SK-N-SH (cell line): ENCODE measurements at regions of chr17 and their contacts with region 1.

Region 1: DNA sequence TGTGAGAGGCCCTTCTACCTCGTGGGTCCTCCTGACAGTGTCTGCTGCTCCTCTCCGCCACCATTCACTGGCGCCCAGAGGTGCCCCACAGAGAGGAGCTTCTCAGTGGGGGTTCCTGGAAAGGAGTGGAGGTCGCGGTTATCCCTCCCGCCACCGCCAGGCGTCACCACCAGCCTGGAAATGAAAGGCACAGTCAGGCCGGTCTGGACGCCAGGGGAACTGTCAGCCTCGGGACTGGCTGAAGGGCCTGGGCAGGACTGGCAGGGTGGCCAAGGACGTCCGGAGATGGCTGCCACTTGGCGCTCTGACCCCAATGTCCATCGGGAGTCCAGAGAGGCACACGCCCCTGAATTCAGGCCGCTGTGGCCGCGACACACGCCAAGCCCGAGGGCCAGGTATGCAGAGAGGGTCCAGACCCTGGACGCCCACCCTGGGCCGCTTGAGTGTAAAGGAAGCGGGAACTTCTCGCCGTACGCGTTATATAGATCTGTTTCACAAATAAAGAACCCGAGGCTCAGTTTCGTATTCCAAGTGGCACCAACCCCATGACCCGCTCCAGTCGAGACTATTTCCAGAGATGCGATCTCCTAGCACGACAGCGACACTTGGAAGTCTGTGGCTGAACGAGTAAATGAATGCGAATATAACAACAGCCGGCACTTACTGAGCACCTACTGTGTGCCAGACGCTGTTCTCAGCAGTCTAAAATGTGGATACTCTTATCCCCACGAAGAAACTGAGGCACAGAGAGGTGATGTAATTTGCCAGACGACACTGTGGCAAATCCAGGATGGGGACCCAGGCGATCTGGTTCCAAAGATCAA is 7.6 kb upstream of the NXPH3 start:
- DNase-seq: peak; percentile 92
- H3K4me3 ChIP-seq: peak overlapping the region; percentile 40 to 56
- H3K27ac ChIP-seq: no peak overlapping the region
- H3K4me1 ChIP-seq: peaks cover 0 to 14% of the 10 kb centered on the region in 2 experiments; a peak in 1 of 4 replicates
- H3K27me3 ChIP-seq: peaks cover 61% of the 10 kb centered on the region
- CTCF ChIP-seq: peak; percentile 99
- EP300 ChIP-seq: no peak
- RAD21 ChIP-seq: peak; percentile 99

Region 2: DNA sequence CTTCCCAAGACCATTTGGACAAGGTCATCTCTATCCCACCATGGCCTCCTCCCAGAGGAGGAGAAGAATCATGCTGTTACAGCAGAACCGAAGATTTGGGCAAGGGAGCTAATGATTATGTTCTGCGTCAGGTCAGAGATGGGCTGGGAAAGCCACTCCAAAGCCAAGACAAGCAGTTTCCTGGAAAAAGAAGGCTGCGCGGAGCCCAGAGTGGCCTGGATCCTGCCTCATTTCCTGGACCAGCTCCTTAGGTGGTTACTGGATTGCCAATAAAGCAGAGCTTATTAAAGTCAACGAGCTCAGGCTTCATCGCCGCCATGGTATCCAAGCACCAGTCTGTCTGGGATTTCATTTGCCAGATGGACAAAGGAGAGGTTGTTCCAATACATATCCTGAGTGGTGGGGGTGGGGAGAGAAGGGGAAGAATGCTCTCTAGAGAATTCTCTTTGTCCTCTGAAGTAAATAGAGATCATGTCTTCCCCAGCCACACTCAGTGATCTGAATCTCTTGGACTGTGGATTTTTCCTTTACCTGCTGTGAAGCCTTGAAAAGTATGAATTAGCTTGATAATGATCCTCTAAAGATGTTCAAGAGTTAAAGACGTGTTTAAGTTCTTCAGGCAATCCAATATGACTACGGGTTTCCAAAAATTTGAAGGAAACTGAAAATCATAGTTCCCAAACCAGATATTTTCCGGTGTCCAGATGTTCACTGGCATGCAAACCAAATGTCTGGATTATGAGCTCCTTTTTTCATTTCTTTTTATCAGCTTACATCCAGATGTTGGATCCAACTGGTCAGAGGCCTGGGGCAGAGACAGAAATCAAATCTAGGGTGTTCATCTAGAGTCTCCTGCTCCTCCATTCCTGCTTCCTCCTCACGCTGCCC is 863.5 kb before region 1 on chr17:
- CTCF ChIA-PET with region 1: no interaction called
- POLR2A ChIA-PET with region 1: no interaction called
- DNase-seq: no peak
- H3K4me3 ChIP-seq: no peak overlapping the region
- H3K27ac ChIP-seq: no peak overlapping the region
- H3K4me1 ChIP-seq: no peaks in the 10 kb centered on the region
- H3K27me3 ChIP-seq: peaks cover 99% of the 10 kb centered on the region
- CTCF ChIP-seq: no peak
- EP300 ChIP-seq: no peak
- RAD21 ChIP-seq: no peak

Region 3: DNA sequence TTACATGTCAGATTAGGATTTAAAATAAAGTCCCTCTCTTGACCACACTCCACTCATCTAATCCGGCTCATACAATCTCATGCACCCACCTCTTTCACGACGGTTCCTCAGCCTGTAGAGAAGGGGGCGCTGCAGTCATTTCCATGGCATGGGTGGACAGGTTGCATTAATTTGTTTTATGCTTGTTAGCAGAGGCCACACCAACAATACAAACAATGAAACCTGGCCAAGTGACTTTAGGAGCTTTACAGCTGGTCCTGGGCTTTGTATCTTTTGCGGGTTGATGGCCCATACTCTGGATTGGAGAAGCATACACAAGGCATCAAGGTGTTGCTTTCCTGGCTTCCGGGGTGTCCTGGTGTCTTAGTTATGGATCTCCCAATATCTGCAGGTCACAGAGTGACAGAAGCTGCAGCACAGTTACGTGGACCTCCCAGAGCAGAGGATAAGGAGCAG is 613.8 kb before region 1 on chr17:
- CTCF ChIA-PET with region 1: no interaction called
- POLR2A ChIA-PET with region 1: no interaction called
- DNase-seq: no peak
- H3K4me3 ChIP-seq: no peak overlapping the region
- H3K27ac ChIP-seq: no peak overlapping the region
- H3K4me1 ChIP-seq: no peaks in the 10 kb centered on the region
- H3K27me3 ChIP-seq: no peaks in the 10 kb centered on the region
- CTCF ChIP-seq: peak; percentile 76
- EP300 ChIP-seq: no peak
- RAD21 ChIP-seq: peak; percentile 67

Region 4: GRCh38 chr17:49277638-49278037 is 290.4 kb before region 1 on chr17:
- CTCF ChIA-PET with region 1: no interaction called
- POLR2A ChIA-PET with region 1: no interaction called
- DNase-seq: no peak
- H3K4me3 ChIP-seq: no peak overlapping the region
- H3K27ac ChIP-seq: no peak overlapping the region
- H3K4me1 ChIP-seq: no peaks in the 10 kb centered on the region
- H3K27me3 ChIP-seq: no peaks in the 10 kb centered on the region
- CTCF ChIP-seq: no peak
- EP300 ChIP-seq: no peak
- RAD21 ChIP-seq: no peak

Region 5: DNA sequence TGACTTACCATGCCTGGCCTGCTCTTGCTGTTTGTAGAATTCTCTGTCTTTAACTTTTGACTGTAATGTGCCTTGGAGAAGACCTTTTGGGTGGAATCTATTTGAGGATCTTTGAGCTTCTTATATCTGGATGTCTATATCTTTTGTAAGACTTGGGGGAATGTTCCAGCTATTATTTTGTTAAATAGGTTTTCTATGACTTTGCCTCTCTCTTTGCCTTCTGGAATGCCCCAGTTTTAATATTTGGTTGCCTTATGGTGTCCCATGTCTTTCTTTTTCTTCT is 143.1 kb before region 1 on chr17:
- CTCF ChIA-PET with region 1: interaction called, 11 read pairs
- POLR2A ChIA-PET with region 1: no interaction called
- DNase-seq: no peak
- H3K4me3 ChIP-seq: peak overlapping the region in 1 of 2 experiments; percentile 5; a peak in 1 of 4 replicates
- H3K27ac ChIP-seq: peak overlapping the region in 1 of 2 experiments; percentile 35; a peak in 2 of 4 replicates
- H3K4me1 ChIP-seq: no peaks in the 10 kb centered on the region
- H3K27me3 ChIP-seq: peaks cover 15% of the 10 kb centered on the region; the same call in 1 of the 2 replicates
- CTCF ChIP-seq: no peak
- EP300 ChIP-seq: no peak
- RAD21 ChIP-seq: no peak

Region 6: GRCh38 chr17:49508061-49508865 is 59.8 kb before region 1 on chr17:
- CTCF ChIA-PET with region 1: interaction called, 10 read pairs
- POLR2A ChIA-PET with region 1: no interaction called
- DNase-seq: peak; percentile 59
- H3K4me3 ChIP-seq: no peak overlapping the region
- H3K27ac ChIP-seq: peak overlapping the region in 1 of 2 experiments; percentile 82; a peak in 1 of 4 replicates
- H3K4me1 ChIP-seq: peaks cover 4 to 57% of the 10 kb centered on the region in 2 experiments; a peak in 1 of 4 replicates
- H3K27me3 ChIP-seq: peaks cover 25% of the 10 kb centered on the region
- CTCF ChIP-seq: no peak
- EP300 ChIP-seq: no peak
- RAD21 ChIP-seq: no peak

Region 7: DNA sequence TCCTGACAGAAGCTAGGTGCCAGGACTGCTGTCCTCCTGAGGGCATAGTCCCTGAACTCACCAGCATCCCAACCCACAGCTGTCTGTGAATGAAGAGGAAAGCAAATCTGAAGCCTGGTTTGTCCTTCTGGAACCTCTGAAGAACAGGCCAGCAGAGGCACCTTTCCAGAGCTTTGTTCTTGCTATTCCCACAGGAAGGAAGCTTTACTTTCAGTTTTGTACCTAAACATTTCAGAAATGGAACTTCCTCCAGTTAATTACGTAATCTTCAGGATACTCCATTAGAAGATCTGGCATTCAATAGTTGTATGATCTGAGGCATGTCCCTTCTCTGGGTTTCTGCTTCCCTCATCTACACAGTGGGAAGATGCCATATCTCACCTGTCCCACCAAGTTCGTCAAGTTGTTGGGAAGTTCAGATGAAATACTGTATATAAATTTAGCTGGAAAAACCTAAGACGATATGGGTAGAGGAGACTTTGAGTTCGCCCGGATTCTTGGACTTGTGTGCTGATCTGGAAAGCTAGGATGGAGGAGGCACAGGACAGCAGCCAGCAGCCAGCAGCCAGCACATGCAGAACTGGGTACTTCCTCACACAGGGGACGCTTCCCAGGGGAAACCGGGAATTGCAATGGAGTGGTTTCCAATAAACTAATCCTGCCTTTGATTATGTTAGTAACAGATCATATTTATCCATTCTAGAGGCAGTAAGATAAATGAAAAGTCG is 30.0 kb after region 1 on chr17:
- CTCF ChIA-PET with region 1: interaction called, 22 read pairs
- POLR2A ChIA-PET with region 1: no interaction called
- DNase-seq: no peak
- H3K4me3 ChIP-seq: no peak overlapping the region
- H3K27ac ChIP-seq: no peak overlapping the region
- H3K4me1 ChIP-seq: no peaks in the 10 kb centered on the region; a peak in 1 of 4 replicates
- H3K27me3 ChIP-seq: no peaks in the 10 kb centered on the region
- CTCF ChIP-seq: no peak
- EP300 ChIP-seq: no peak
- RAD21 ChIP-seq: no peak

Region 8: GRCh38 chr17:49707608-49708514 is 139.8 kb after region 1 on chr17 and contains the start of gene SLC35B1:
- CTCF ChIA-PET with region 1: interaction called, 2,107 read pairs
- POLR2A ChIA-PET with region 1: interaction called, 3 read pairs
- DNase-seq: peak; percentile 99
- H3K4me3 ChIP-seq: peak within 1 kb of the TSS; percentile 85 to 97
- H3K27ac ChIP-seq: peak within 1 kb of the TSS; percentile 80 to 99
- H3K4me1 ChIP-seq: peaks cover 8 to 17% of the 10 kb centered on the region in 2 experiments; a peak in 2 of 4 replicates
- H3K27me3 ChIP-seq: no peaks in the 10 kb centered on the region
- CTCF ChIP-seq: peak; percentile 99
- EP300 ChIP-seq: peak in 1 of 2 experiments; percentile 36; a peak in 1 of 4 replicates
- RAD21 ChIP-seq: peak; percentile 69
- polyA plus RNA-seq, gene SLC35B1: 89.8 and 109 TPM in 2 replicates

Region 9: GRCh38 chr17:49788478-49789242 is 220.6 kb after region 1 on chr17 and contains the start of gene KAT7:
- CTCF ChIA-PET with region 1: interaction called, 15 read pairs
- POLR2A ChIA-PET with region 1: no interaction called
- DNase-seq: peak; percentile 98
- H3K4me3 ChIP-seq: peak within 1 kb of the TSS; percentile 92 to 99
- H3K27ac ChIP-seq: peak within 1 kb of the TSS; percentile 96 to 97
- H3K4me1 ChIP-seq: peaks cover 13 to 16% of the 10 kb centered on the region in 2 experiments
- H3K27me3 ChIP-seq: no peaks in the 10 kb centered on the region
- CTCF ChIP-seq: no peak
- EP300 ChIP-seq: no peak
- RAD21 ChIP-seq: no peak
- polyA plus RNA-seq, gene KAT7: 18.5 and 20.2 TPM in 2 replicates

Region 10: GRCh38 chr17:50213026-50214022 is 645.2 kb after region 1 on chr17:
- CTCF ChIA-PET with region 1: no interaction called
- POLR2A ChIA-PET with region 1: no interaction called
- DNase-seq: peak; percentile 56
- H3K4me3 ChIP-seq: no peak overlapping the region
- H3K27ac ChIP-seq: no peak overlapping the region
- H3K4me1 ChIP-seq: peaks cover 43 to 65% of the 10 kb centered on the region in 2 experiments
- H3K27me3 ChIP-seq: no peaks in the 10 kb centered on the region
- CTCF ChIP-seq: peak; percentile 55
- EP300 ChIP-seq: no peak
- RAD21 ChIP-seq: peak; percentile 39; the same call in 1 of the 2 replicates